Ascending aorta (tissue), 2 donors: ENCODE measurements at regions of chr13 and their contacts with region 1.

Region 1: GRCh38 chr13:44917589-44918325 is 71.5 kb downstream of the NUFIP1 start:
- DNase-seq: peak; percentile 82 to 97
- H3K4me3 ChIP-seq: peak overlapping the region; percentile 42 to 60
- H3K27ac ChIP-seq: peak overlapping the region; percentile 98
- H3K4me1 ChIP-seq: peaks cover 21 to 38% of the 10 kb centered on the region in 2 donors
- H3K27me3 ChIP-seq: no peaks in the 10 kb centered on the region
- CTCF ChIP-seq: peak; percentile 53 to 81 (median 62)

Region 2: GRCh38 chr13:44710576-44710975 is 207.2 kb before region 1 on chr13:
- intact Hi-C with region 1: loop called (anchors 5 kb)
- DNase-seq: no peak
- H3K4me3 ChIP-seq: no peak overlapping the region
- H3K27ac ChIP-seq: peak overlapping the region; percentile 74 to 88
- H3K4me1 ChIP-seq: peaks cover 0 to 50% of the 10 kb centered on the region in 2 donors
- H3K27me3 ChIP-seq: no peaks in the 10 kb centered on the region
- CTCF ChIP-seq: no peak

Region 3: DNA sequence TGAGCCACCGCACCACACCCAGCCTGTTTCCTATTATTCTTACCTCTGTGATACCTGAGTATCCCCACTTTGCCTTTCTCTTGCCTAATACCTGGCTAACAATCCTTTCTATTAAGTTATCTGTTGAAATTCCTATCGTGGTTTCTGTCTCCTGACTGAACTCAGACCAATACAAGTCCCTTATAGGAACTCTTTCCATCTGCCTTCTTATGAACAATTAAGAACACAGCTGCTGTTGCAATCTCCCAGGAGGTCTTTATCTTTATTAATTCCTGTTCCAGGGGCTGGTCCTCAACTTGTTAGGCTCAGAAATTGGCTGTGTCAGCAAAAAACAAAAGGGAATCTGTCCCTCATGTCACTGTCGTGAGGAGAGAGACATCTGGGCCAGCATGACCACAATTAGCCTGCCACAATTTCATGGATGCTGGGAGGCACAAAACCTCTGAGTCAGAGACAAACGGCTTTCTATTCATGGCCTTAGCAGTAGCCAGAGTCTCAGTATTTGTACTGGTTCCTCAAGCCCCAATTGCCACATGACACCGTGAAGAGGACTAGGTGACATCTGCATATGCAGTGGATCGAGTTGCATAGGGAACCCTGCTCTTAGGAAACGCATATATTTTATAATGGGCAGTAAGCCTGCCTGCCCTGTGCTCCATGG is 13.3 kb after region 1 on chr13:
- intact Hi-C with region 1: loop called (anchors 1 kb)
- DNase-seq: no peak
- H3K4me3 ChIP-seq: no peak overlapping the region
- H3K27ac ChIP-seq: peak overlapping the region; percentile 68 to 79
- H3K4me1 ChIP-seq: peaks cover 7 to 36% of the 10 kb centered on the region in 2 donors
- H3K27me3 ChIP-seq: no peaks in the 10 kb centered on the region
- CTCF ChIP-seq: no peak

Region 4: GRCh38 chr13:45325806-45326205 is 408.0 kb after region 1 on chr13:
- intact Hi-C with region 1: loop called (anchors 5 kb)
- DNase-seq: peak; percentile 39 to 88
- H3K4me3 ChIP-seq: no peak overlapping the region
- H3K27ac ChIP-seq: peak overlapping the region; percentile 68 to 91
- H3K4me1 ChIP-seq: peaks cover 15 to 40% of the 10 kb centered on the region in 2 donors
- H3K27me3 ChIP-seq: no peaks in the 10 kb centered on the region
- CTCF ChIP-seq: no peak